Tibial artery (tissue), 4 donors: ENCODE measurements at regions of chr7 and their contacts with region 1.

Region 1: GRCh38 chr7:8217200-8218068 is 44.5 kb downstream of the ICA1 start:
- DNase-seq: no peak
- H3K4me3 ChIP-seq: no peak overlapping the region
- H3K27ac ChIP-seq: no peak overlapping the region
- H3K4me1 ChIP-seq: peaks cover 0 to 3% (median 0%) of the 10 kb centered on the region in 4 donors
- H3K27me3 ChIP-seq: no peaks in the 10 kb centered on the region
- CTCF ChIP-seq: peak; percentile 65 to 84

Region 2: DNA sequence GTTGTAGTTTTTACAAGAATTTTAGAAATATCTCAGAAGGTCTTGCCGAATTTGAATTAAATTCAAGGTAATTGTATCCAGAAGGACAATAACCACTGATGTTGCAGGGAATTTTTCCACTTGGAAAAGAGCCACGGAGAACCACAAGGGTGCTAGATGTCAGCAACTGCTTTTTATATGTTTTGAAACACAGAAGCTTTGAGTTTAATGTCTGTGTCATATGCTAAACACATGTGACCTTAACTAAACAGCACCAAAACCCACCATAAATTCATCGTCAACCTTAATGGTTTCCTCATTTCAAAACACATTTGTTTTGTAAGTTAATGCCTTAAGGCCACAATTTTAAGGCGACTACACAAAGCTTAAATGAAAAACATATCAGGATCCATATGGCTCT is 788.6 kb before region 1 on chr7:
- intact Hi-C with region 1: loop called (anchors 5 kb)
- DNase-seq: no peak
- H3K4me3 ChIP-seq: no peak overlapping the region
- H3K27ac ChIP-seq: no peak overlapping the region
- H3K4me1 ChIP-seq: no peaks in the 10 kb centered on the region
- H3K27me3 ChIP-seq: no peaks in the 10 kb centered on the region
- CTCF ChIP-seq: no peak

Region 3: GRCh38 chr7:7681179-7681935 is 536.1 kb before region 1 on chr7:
- intact Hi-C with region 1: loop called (anchors 10 kb)
- DNase-seq: peak in 1 of 2 donors; percentile 41
- H3K4me3 ChIP-seq: no peak overlapping the region
- H3K27ac ChIP-seq: peak overlapping the region in 1 of 2 donors; percentile 17
- H3K4me1 ChIP-seq: peaks cover 0 to 27% (median 7%) of the 10 kb centered on the region in 4 donors
- H3K27me3 ChIP-seq: no peaks in the 10 kb centered on the region
- CTCF ChIP-seq: peak; percentile 61 to 72

Region 4: GRCh38 chr7:7761340-7761980 is 456.0 kb before region 1 on chr7:
- intact Hi-C with region 1: loop called (anchors 10 kb)
- DNase-seq: no peak
- H3K4me3 ChIP-seq: peak overlapping the region; percentile 42 to 46
- H3K27ac ChIP-seq: peak overlapping the region; percentile 23 to 61
- H3K4me1 ChIP-seq: peaks cover 0 to 13% (median 6%) of the 10 kb centered on the region in 4 donors
- H3K27me3 ChIP-seq: no peaks in the 10 kb centered on the region
- CTCF ChIP-seq: peak; percentile 43 to 53

Region 5: DNA sequence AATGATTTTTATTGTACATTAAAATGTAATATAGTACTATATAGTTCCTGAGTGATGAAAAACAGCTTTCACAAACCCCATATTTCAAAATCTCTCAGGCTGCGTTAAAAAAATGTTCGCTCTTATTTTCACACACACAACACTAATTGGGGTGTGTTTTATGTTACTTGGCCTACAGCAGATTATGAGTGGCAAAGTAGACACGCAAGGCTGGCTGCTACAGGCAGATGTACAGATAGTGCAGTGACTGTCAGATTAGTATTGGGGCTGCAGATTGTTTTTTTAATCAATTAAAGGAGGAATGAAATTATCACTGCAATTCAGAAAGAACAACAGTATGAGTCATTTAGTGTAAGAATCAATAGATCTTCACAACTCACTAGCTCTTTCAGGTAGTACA is 109.8 kb after region 1 on chr7:
- intact Hi-C with region 1: no loop called
- DNase-seq: no peak
- H3K4me3 ChIP-seq: no peak overlapping the region
- H3K27ac ChIP-seq: no peak overlapping the region
- H3K4me1 ChIP-seq: no peaks in the 10 kb centered on the region
- H3K27me3 ChIP-seq: no peaks in the 10 kb centered on the region
- CTCF ChIP-seq: no peak